A549 (cell line): ENCODE measurements at regions of chr1 and their contacts with region 1.

Region 1: DNA sequence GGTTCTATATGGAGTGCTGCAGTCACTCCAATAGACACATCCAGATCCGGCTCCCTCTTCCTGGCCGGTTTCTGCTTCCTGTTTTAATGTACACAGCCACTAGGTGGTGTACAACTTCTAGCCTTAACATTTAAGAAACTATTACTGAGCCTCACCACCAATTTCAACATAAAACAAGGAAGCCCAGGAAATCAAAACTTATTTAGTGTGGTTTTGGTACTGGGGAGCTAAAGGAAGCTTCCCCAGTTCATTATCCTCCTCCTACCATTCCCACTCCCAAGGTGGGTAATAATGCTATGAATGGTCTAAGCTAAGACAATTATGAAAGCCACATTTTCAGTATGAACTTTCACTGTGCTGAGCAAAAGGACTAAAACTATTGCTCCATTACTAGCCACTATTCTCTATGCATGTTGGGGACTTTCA is 25.5 kb upstream of the MTMR11 start:
- DNase-seq: peak; percentile 51 to 79
- ATAC-seq: peak; percentile 94
- H3K4me3 ChIP-seq: no peak overlapping the region
- H3K27ac ChIP-seq: no peak overlapping the region
- H3K4me1 ChIP-seq: no peaks in the 10 kb centered on the region
- CTCF ChIP-seq: peak; percentile 92
- EP300 ChIP-seq: no peak
- POLR2A ChIP-seq: no peak
- RAD21 ChIP-seq: peak; percentile 80 to 82

Region 2: DNA sequence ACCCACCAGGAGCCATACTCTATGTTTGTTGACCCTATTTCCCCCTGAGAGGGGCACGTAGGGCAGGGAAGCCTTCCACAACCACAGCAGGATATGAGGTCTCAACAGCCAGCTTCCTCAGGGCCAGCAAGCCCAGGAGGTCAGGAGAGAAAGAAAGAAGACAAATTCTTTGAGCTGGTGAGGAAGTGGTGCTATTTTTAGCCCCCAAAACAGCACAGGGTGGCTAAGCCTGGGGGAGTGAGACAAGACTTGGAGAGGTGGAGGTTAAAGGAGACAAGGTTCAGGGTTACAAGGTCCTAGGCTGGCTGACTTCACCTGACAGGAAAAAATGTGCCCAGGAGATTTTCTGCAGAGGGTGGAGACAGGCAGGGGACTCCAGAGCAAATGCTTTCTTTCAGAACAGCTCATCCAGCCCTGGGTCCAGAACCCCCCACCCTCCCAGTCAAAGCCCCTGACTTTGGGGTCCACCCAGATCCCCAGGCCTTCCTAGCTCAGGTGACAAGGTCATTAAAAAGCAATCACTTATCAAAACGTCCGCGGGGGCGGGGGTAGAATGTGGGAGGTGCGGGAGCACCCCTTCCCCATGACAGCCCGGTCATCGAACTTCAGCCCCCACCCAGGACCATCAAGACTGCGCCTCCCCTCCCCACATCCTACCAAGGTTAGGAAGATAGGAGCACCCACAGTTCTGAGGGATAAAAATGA is 45.8 kb before region 1 on chr1:
- CTCF ChIA-PET with region 1: no interaction called
- POLR2A ChIA-PET with region 1: no interaction called
- DNase-seq: no peak
- ATAC-seq: no peak
- H3K4me3 ChIP-seq: no peak overlapping the region
- H3K27ac ChIP-seq: no peak overlapping the region
- H3K4me1 ChIP-seq: no peaks in the 10 kb centered on the region
- CTCF ChIP-seq: no peak
- EP300 ChIP-seq: no peak
- POLR2A ChIP-seq: no peak
- RAD21 ChIP-seq: no peak

Region 3: GRCh38 chr1:149949911-149950310 is 12.2 kb before region 1 on chr1:
- CTCF ChIA-PET with region 1: interaction called, 23 read pairs
- POLR2A ChIA-PET with region 1: no interaction called
- DNase-seq: no peak
- ATAC-seq: no peak
- H3K4me3 ChIP-seq: no peak overlapping the region
- H3K27ac ChIP-seq: no peak overlapping the region
- H3K4me1 ChIP-seq: no peaks in the 10 kb centered on the region
- CTCF ChIP-seq: no peak
- EP300 ChIP-seq: no peak
- POLR2A ChIP-seq: no peak
- RAD21 ChIP-seq: no peak

Region 4: GRCh38 chr1:149986486-149987294 is 24.6 kb after region 1 on chr1:
- CTCF ChIA-PET with region 1: interaction called, 13 read pairs
- POLR2A ChIA-PET with region 1: no interaction called
- DNase-seq: no peak
- ATAC-seq: peak in 1 of 2 experiments; percentile 38; a peak in 1 of 6 replicates
- H3K4me3 ChIP-seq: no peak overlapping the region
- H3K27ac ChIP-seq: no peak overlapping the region
- H3K4me1 ChIP-seq: 0 out of 3 replicates have a peak, but pooled peaks cover 3% of the 10 kb centered on the region
- CTCF ChIP-seq: no peak
- EP300 ChIP-seq: no peak
- POLR2A ChIP-seq: no peak
- RAD21 ChIP-seq: no peak

Region 5: DNA sequence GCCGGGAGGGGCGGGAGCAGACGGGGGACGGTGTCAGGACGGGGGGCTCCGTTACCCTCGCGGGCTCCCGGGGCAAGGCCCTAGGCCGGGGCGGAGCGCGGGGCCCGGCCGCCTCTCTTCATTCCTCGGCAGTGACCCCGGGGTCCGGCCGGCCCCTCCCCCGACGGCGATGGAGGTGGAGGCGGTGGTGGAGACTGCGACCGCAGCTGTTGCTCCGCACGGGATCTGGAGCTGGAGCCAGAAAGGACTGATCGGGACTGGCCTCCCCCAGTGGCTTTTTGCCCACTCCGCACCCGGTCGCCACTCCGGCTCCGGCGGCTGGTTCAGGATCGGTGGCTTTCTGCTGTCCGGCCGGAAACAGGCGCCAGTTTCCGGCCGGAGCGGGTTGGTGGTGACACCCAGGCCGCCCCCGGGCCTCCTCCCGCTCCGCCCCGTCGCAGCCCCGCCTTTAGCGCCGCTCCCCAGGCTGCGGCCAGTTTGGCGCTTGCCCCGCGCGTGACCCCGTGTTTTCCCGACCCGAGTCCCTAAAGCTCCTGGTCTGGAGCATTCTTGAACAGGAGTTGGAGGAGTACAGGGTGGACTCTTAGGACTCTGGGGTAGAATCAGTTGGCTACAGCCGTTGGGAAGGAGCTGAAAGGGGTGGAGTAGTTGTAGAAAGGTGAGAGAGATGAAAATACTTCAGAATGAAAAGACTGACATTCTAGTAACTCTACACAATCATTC is 48.4 kb after region 1 on chr1 and contains the start of gene OTUD7B:
- CTCF ChIA-PET with region 1: interaction called, 27 read pairs
- POLR2A ChIA-PET with region 1: no interaction called
- DNase-seq: peak; percentile 69 to 89
- ATAC-seq: peak; percentile 93 to 94
- H3K4me3 ChIP-seq: peak within 1 kb of the TSS; percentile 59
- H3K27ac ChIP-seq: peak within 1 kb of the TSS; percentile 88 to 96
- H3K4me1 ChIP-seq: peaks cover 29% of the 10 kb centered on the region
- CTCF ChIP-seq: no peak; the same call in 2 of the 3 replicates
- EP300 ChIP-seq: no peak
- POLR2A ChIP-seq: peak; percentile 72
- RAD21 ChIP-seq: peak in 1 of 2 experiments; percentile 25; a peak in 2 of 5 replicates
- polyA plus RNA-seq, gene OTUD7B: 12.1 and 13.0 TPM in 2 replicates

Region 6: GRCh38 chr1:150053926-150054325 is 91.8 kb after region 1 on chr1:
- CTCF ChIA-PET with region 1: interaction called, 20 read pairs
- POLR2A ChIA-PET with region 1: no interaction called
- DNase-seq: no peak
- ATAC-seq: no peak
- H3K4me3 ChIP-seq: no peak overlapping the region
- H3K27ac ChIP-seq: no peak overlapping the region
- H3K4me1 ChIP-seq: 0 out of 3 replicates have a peak, but pooled peaks cover 3% of the 10 kb centered on the region
- CTCF ChIP-seq: no peak
- EP300 ChIP-seq: no peak
- POLR2A ChIP-seq: no peak
- RAD21 ChIP-seq: no peak